ENCODE measurements at regions of chr6 and their contacts with region 1.

Region 1: DNA sequence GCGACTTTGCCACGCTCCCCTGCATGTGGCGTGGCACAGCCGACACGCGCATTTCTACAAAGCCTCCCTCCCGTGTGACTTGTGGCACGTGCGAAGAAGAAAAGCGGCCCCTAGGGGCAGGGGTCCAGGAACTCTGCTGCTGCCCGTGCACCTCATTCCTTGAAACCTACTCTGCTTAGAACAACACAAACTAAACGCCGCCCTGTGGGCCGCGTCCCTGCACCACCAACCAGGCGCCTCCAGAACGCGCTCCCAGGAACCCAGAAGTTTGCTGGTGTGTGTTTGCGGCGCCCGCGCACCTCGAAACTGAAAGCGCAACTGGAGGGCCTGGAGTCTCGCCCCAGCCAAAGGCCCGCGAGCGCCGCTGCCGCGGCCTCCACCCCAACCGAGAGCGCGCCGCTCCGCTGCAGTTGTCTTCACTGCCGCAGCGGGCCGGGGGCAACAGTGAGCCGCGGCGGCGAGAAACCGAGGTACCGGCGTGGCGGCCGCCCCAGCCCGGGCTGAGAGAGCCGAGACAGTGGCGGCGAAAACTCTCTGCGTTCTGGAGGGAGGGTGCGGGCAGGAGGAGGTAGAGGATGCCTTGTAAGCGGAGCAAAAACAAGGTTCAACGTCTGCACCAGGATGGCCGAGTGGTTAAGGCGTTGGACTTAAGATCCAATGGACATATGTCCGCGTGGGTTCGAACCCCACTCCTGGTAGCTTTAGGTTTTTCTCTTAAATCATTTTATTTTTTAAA is 65.8 kb downstream of the STX11 start:
- DNase-seq: peak; percentile 94
- ATAC-seq: peak; percentile 92
- H3K4me3 Mint-ChIP-seq: peak overlapping the region; percentile 81
- H3K27ac Mint-ChIP-seq: peak overlapping the region; percentile 93
- H3K4me1 Mint-ChIP-seq: peaks cover 34% of the 10 kb centered on the region
- H3K27me3 Mint-ChIP-seq: peaks cover 2% of the 10 kb centered on the region
- CTCF ChIP-seq: peak; percentile 73

Region 2: DNA sequence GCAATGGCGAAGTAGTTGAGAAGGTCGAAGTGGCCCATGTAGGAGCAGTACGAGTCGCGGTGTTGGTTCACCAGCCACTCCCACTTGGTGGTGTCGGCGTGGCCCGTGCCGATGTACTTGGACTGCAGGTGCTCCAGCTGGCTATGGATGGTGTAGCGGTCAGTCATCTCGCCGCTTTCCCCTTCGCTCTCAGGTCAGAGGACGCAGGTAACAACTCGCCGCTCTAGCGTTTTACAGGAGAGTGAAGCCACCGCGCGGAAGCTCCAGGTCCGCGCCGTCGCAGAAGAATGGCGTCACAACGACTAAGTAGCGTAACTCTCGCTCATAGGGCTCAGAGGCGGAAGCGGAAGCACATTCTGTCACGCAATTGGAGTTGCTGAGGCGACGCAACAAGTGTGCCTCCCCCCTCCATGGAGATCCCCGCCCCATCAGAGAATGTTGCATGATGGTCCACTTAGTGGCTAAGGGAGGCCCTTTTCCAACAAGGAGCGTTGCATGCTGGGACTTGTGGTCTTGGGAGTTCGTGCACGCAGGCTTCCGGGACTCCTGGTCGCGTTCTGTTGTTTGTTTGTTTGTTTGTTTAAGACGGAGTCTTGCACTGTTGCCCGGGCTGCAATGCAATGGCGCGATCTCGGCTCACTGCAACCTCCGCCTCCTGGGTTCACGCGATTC is 120.6 kb before region 1 on chr6 and contains the start of gene SF3B5:
- CTCF ChIA-PET with region 1: interaction called, 19 read pairs
- POLR2A ChIA-PET with region 1: interaction called, 6 read pairs
- intact Hi-C with region 1: no loop called
- DNase-seq: peak; percentile 99
- ATAC-seq: peak; percentile 98
- H3K4me3 Mint-ChIP-seq: peak within 1 kb of the TSS; percentile 95
- H3K27ac Mint-ChIP-seq: peak within 1 kb of the TSS; percentile 98
- H3K4me1 Mint-ChIP-seq: peaks cover 21% of the 10 kb centered on the region
- H3K27me3 Mint-ChIP-seq: no peaks in the 10 kb centered on the region
- CTCF ChIP-seq: no peak
- total RNA-seq, gene SF3B5: 207 to 210 TPM

Region 3: GRCh38 chr6:144104898-144105487 is 111.1 kb before region 1 on chr6:
- CTCF ChIA-PET with region 1: interaction called, 44 read pairs
- POLR2A ChIA-PET with region 1: no interaction called
- intact Hi-C with region 1: loop called (anchors 1 kb)
- DNase-seq: peak; percentile 45
- ATAC-seq: peak; percentile 86
- H3K4me3 Mint-ChIP-seq: no peak overlapping the region
- H3K27ac Mint-ChIP-seq: no peak overlapping the region
- H3K4me1 Mint-ChIP-seq: peaks cover 11% of the 10 kb centered on the region
- H3K27me3 Mint-ChIP-seq: no peaks in the 10 kb centered on the region
- CTCF ChIP-seq: peak; percentile 84

Region 4: DNA sequence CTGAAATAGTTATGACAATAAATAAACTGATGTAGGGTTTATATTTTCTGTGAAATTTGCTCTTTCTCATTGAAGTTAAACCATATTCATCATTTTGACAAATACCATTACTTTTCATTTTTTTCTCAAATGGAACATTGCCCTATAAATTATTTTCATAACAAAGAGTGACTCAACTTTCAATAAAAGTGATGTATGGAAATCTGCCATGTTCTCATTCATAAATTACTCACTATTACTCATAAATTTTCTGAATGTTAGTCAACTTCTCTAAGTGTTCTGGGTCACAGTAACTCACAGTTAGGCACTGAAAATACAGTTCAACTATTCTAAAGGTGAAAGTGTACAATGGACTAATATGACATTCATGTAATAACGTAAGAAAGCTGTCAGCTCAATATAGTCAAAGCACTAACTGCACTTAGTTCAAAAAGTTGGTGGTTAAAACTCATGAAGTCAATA is 84.8 kb before region 1 on chr6:
- CTCF ChIA-PET with region 1: interaction called, 10 read pairs
- POLR2A ChIA-PET with region 1: interaction called, 3 read pairs
- intact Hi-C with region 1: no loop called
- DNase-seq: no peak
- ATAC-seq: peak; percentile 93
- H3K4me3 Mint-ChIP-seq: peak overlapping the region; percentile 42
- H3K27ac Mint-ChIP-seq: peak overlapping the region; percentile 94
- H3K4me1 Mint-ChIP-seq: peaks cover 37% of the 10 kb centered on the region
- H3K27me3 Mint-ChIP-seq: peaks cover 2% of the 10 kb centered on the region
- CTCF ChIP-seq: no peak

Region 5: DNA sequence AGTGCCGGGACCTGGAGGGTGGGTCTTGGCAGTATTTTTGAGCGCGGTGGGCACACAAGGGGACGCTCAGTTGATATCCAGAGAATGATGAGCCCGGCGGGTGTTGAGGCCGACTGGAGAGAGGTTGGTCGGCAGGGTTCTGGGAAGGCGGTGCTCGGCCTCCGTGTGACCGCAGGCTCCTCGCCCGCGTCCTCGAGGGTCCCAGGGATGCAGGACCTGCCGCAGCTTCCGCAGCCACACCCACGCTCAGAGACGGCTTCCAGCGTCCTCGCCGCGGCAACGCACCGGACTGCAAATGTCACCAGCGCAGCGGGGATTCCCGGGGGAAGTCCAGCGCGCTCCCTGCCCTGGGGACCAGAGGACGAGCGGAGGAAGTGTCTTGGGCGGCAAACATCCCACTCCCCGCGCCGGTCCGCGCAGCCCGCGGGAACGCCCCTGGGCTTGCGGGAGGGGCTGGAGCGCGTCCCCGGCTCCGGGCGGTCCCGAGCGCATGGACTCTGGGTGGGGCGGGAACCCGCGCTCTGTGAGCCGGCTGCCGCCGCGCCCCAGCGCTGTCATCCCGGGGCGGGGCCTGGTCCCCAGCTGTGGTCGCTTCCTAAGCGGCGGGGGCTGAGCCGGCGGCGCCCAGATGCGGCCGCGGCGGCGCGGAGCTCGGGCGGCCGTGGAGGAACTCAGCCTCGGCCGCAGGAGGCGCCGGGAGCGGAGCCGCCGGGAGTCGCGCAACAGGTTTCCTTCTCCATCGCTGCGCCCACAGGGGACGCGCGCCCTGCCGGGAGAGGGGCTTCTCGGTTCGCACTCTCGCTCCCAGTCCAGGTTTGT is 66.0 kb before region 1 on chr6 and contains the start of gene STX11:
- CTCF ChIA-PET with region 1: interaction called, 3 read pairs
- POLR2A ChIA-PET with region 1: interaction called, 5 read pairs
- intact Hi-C with region 1: loop called (anchors 2 kb)
- DNase-seq: peak; percentile 91
- ATAC-seq: peak; percentile 77
- H3K4me3 Mint-ChIP-seq: peak within 1 kb of the TSS; percentile 93
- H3K27ac Mint-ChIP-seq: peak within 1 kb of the TSS; percentile 94
- H3K4me1 Mint-ChIP-seq: peaks cover 44% of the 10 kb centered on the region
- H3K27me3 Mint-ChIP-seq: no peaks in the 10 kb centered on the region
- CTCF ChIP-seq: no peak
- total RNA-seq, gene STX11: 19.4 to 20.7 TPM

Region 6: GRCh38 chr6:144232176-144232831 is 16.2 kb after region 1 on chr6:
- CTCF ChIA-PET with region 1: interaction called, 29 read pairs
- POLR2A ChIA-PET with region 1: interaction called, 3 read pairs
- intact Hi-C with region 1: no loop called
- DNase-seq: no peak
- ATAC-seq: no peak
- H3K4me3 Mint-ChIP-seq: no peak overlapping the region
- H3K27ac Mint-ChIP-seq: no peak overlapping the region
- H3K4me1 Mint-ChIP-seq: no peaks in the 10 kb centered on the region
- H3K27me3 Mint-ChIP-seq: no peaks in the 10 kb centered on the region
- CTCF ChIP-seq: no peak

Measured in activated CD8-positive, alpha-beta T cell treated with anti-CD3 and anti-CD28 coated beads for 36 hours (primary cell).